CD8-positive, alpha-beta T cell (primary cell): ENCODE measurements at regions of chrX and their contacts with region 1.

Region 1: GRCh38 chrX:77785486-77786364 is at the start of gene ATRX:
- DNase-seq: peak; percentile 55 to 91 (median 73)
- ATAC-seq: peak; percentile 91
- H3K4me3 ChIP-seq: peak within 1 kb of the TSS; percentile 85 to 93
- H3K4me3 Mint-ChIP-seq: peak within 1 kb of the TSS; percentile 100
- H3K27ac ChIP-seq: peak within 1 kb of the TSS; percentile 92 to 93
- H3K27ac Mint-ChIP-seq: peak within 1 kb of the TSS; percentile 100
- H3K4me1 ChIP-seq: peaks cover 16% of the 10 kb centered on the region
- H3K4me1 Mint-ChIP-seq: peaks cover 38% of the 10 kb centered on the region
- H3K27me3 ChIP-seq: no peaks in the 10 kb centered on the region
- H3K27me3 Mint-ChIP-seq: no peaks in the 10 kb centered on the region
- CTCF ChIP-seq: no peak
- total RNA-seq, gene ATRX: 61.2 to 65.7 TPM

Region 2: DNA sequence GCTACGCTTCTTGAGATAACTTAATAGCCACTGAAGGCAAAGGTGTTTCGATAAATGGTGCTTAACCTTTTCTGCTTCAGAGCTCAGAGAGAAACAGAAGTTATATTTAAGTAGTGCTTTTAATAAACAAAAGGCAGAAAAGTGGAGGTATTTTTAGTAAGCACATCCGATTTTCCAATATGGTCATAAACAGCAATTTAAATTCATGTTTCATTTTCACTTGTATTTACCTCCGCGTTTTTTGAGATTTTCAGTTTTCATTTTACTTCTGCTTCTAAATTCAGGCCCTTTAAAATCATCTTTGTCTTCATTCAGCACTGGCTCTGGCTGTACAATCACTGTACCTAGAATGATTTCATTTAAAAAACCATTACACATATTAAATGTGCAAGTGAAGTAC is 92.1 kb before region 1 on chrX:
- CTCF ChIA-PET with region 1: no interaction called
- POLR2A ChIA-PET with region 1: no interaction called
- intact Hi-C with region 1: loop called in 1 of 2 experiments (anchors 10 kb)
- DNase-seq: no peak
- ATAC-seq: no peak
- H3K4me3 ChIP-seq: no peak overlapping the region
- H3K4me3 Mint-ChIP-seq: no peak overlapping the region
- H3K27ac ChIP-seq: no peak overlapping the region
- H3K27ac Mint-ChIP-seq: peak overlapping the region; percentile 73
- H3K4me1 ChIP-seq: no peaks in the 10 kb centered on the region
- H3K4me1 Mint-ChIP-seq: peaks cover 19% of the 10 kb centered on the region
- H3K27me3 ChIP-seq: no peaks in the 10 kb centered on the region
- H3K27me3 Mint-ChIP-seq: no peaks in the 10 kb centered on the region
- CTCF ChIP-seq: no peak